ENCODE measurements at regions of chrX and their contacts with region 1.

Region 1: GRCh38 chrX:114075073-114075673 is 508.7 kb upstream of the HTR2C start:
- H3K4me3 Mint-ChIP-seq: no peak overlapping the region
- H3K27ac Mint-ChIP-seq: no peak overlapping the region
- H3K4me1 Mint-ChIP-seq: no peaks in the 10 kb centered on the region
- H3K27me3 Mint-ChIP-seq: no peaks in the 10 kb centered on the region

Region 2: DNA sequence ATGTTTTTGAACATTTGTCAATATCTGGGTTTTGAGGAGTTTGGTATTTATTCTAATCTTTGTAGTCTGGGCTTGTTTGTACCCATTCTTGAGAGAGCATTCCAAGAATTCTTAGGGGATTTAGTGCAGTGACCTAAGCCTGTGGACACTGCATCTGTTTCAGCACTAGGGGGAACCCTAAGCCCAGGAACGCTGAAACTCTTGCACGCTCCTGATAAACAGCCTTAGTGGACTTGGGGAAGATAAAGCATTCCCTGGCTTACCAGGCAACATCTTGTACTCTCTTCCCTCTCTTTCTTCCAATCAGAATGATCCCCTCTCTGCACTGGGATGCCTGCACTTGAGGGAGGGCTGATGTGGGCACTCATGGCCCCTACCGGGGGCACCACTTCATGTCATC is 146.2 kb before region 1 on chrX:
- intact Hi-C with region 1: loop called (anchors 1 kb)
- H3K4me3 Mint-ChIP-seq: no peak overlapping the region
- H3K27ac Mint-ChIP-seq: no peak overlapping the region
- H3K4me1 Mint-ChIP-seq: no peaks in the 10 kb centered on the region
- H3K27me3 Mint-ChIP-seq: no peaks in the 10 kb centered on the region

Region 3: DNA sequence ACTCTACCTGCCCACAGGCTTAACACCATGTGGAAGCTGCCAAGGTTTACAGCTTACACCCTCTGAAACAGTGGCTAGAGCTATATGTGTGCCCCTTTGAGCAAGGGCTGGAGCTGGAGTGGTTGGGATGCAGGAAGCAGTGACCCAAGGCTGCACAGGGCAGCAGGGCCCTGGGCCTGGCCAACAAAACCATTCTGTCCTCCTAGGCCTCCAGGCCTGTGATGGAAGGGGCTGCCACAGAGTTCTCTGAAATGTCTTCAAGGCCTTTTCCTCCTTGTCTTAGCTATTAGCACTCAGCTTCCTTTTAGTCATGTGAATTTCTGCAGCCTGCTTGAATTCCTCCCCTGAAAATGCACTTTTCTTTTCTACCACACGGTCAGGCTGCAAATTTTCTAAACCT is 857.4 kb after region 1 on chrX:
- intact Hi-C with region 1: no loop called
- H3K4me3 Mint-ChIP-seq: no peak overlapping the region
- H3K27ac Mint-ChIP-seq: no peak overlapping the region
- H3K4me1 Mint-ChIP-seq: no peaks in the 10 kb centered on the region
- H3K27me3 Mint-ChIP-seq: no peaks in the 10 kb centered on the region